MCF 10A (cell line): ENCODE measurements at regions of chr19 and their contacts with region 1.

Region 1: GRCh38 chr19:55258828-55259539 is at the start of gene PPP6R1:
- DNase-seq: peak; percentile 99
- H3K4me3 Mint-ChIP-seq: peak within 1 kb of the TSS; percentile 88
- H3K27ac Mint-ChIP-seq: peak within 1 kb of the TSS; percentile 92
- H3K4me1 Mint-ChIP-seq: peaks cover 34% of the 10 kb centered on the region
- H3K27me3 Mint-ChIP-seq: no peaks in the 10 kb centered on the region
- CTCF ChIP-seq: no peak
- total RNA-seq, gene PPP6R1: 70.6 and 78.9 TPM in 2 replicates

Region 2: GRCh38 chr19:55117636-55118391 is 141.2 kb before region 1 on chr19 and contains the start of gene PPP1R12C:
- CTCF ChIA-PET with region 1: no interaction called
- POLR2A ChIA-PET with region 1: interaction called, 10 read pairs
- intact Hi-C with region 1: no loop called
- DNase-seq: peak; percentile 99
- H3K4me3 Mint-ChIP-seq: peak within 1 kb of the TSS; percentile 87
- H3K27ac Mint-ChIP-seq: peak within 1 kb of the TSS; percentile 92
- H3K4me1 Mint-ChIP-seq: peaks cover 25% of the 10 kb centered on the region
- H3K27me3 Mint-ChIP-seq: peaks cover 4% of the 10 kb centered on the region
- CTCF ChIP-seq: no peak
- total RNA-seq, gene PPP1R12C: 76.4 and 88.6 TPM in 2 replicates

Region 3: DNA sequence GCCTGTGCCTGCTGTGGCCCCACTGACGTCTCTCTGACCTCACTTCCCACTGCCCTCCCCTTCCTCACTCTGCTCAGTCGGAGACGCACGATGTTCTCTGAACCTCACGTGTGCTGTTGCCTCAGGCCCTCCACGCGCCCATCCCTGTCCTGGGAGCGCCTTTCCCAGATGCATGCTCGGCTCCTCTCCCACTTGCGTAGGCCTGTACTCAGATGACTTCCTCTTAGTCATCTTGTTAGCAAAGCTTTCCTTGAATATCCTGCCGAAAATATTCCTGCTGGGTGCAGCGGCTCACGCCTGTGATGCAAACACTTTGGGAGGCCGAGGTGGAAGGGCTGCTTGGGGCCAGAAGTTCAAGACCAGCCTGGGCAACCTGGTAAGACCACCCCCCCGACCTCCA is 69.6 kb before region 1 on chr19:
- CTCF ChIA-PET with region 1: interaction called, 3 read pairs
- POLR2A ChIA-PET with region 1: interaction called, 22 read pairs
- intact Hi-C with region 1: no loop called
- DNase-seq: peak; percentile 100
- H3K4me3 Mint-ChIP-seq: peak overlapping the region; percentile 64
- H3K27ac Mint-ChIP-seq: peak overlapping the region; percentile 99
- H3K4me1 Mint-ChIP-seq: peaks cover 14% of the 10 kb centered on the region
- H3K27me3 Mint-ChIP-seq: no peaks in the 10 kb centered on the region
- CTCF ChIP-seq: no peak

Region 4: DNA sequence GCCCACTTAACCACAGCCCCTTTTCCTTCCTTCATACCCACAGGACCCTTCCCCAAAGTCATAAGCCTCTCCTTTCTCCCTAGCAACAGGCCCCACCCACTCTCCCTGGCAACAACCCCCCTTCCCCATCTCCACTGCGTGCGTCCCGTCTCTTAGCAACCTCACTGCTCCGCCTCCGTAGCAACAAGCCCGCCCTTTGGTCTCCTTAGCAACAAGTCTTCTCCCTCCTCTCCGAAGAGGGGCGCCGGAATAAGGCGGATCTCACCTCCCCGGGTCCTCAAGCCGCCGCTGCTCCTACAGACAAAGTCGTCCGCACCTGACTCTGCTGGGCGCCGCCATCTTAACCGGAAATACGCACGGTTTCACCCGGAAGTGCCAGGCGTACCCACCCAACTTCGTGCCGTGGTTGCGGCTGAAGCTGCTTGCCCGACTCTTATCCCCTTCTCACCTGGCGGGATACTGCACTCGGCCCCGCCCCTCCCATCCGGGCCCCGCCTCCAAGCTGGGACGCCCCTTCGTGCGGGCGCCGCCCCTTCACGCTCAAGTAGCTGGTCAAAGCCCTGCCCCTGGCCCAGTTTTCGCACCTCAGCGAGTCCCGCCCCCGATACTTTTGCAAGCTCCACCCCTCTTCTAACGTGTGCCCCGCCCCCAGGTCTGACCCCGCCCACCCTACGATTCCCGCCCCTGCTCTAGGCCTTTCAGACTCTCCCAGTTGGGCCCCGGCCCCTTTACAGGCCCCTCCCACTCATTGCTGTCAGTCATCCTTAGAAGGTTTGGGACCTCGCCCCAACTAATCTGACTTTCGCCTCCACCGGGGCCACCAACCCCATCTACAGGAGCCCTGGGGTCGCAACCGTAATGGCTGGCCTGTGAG is 21.0 kb after region 1 on chr19 and contains the start of gene HSPBP1:
- CTCF ChIA-PET with region 1: interaction called, 4 read pairs
- POLR2A ChIA-PET with region 1: interaction called, 28 read pairs
- intact Hi-C with region 1: no loop called
- DNase-seq: peak; percentile 98
- H3K4me3 Mint-ChIP-seq: peak within 1 kb of the TSS; percentile 96
- H3K27ac Mint-ChIP-seq: peak within 1 kb of the TSS; percentile 100
- H3K4me1 Mint-ChIP-seq: peaks cover 34% of the 10 kb centered on the region
- H3K27me3 Mint-ChIP-seq: peaks cover 12% of the 10 kb centered on the region
- CTCF ChIP-seq: no peak
- total RNA-seq, gene HSPBP1: 49.2 and 53.1 TPM in 2 replicates

Region 5: DNA sequence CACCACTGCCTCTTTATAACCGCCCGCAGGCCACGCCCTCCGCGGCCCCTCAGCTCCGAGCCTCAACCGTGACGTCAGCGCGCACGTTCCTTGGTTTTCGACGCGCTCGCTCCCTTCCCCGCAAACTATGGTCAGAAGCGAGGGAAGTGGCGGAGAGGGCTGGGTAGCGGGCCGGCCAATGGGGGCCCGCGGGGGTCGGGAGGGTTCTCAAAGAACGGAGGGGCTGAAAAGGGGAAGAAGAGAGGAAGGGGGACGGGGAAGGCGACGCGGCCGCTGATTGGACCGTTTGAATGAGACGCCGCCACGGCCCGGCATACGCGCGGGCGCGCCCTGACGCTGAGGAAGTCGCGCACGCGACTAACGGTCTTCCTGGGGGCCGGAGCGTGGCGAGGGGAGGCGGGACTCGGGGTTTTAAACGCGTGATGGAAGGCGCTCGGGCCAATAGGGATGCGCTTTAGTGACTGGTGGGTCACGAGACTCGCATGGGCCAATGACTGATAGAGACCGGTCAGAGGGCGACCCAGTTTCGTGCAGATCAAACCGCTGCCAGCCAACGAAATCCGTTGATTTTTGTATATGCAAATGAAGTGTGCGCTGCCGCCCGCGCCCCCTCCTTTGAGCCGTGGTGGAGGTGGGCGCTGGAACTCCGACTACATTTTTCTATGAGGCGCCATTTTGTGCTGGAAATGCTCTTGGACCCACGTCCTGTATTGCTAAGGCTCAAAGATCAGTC is 149.0 kb after region 1 on chr19:
- CTCF ChIA-PET with region 1: interaction called, 3 read pairs
- POLR2A ChIA-PET with region 1: interaction called, 11 read pairs
- intact Hi-C with region 1: no loop called
- DNase-seq: peak; percentile 100
- H3K4me3 Mint-ChIP-seq: peak overlapping the region; percentile 94
- H3K27ac Mint-ChIP-seq: peak overlapping the region; percentile 99
- H3K4me1 Mint-ChIP-seq: peaks cover 21% of the 10 kb centered on the region
- H3K27me3 Mint-ChIP-seq: no peaks in the 10 kb centered on the region
- CTCF ChIP-seq: no peak